ENCODE measurements at regions of chr11 and their contacts with region 1.

Region 1: DNA sequence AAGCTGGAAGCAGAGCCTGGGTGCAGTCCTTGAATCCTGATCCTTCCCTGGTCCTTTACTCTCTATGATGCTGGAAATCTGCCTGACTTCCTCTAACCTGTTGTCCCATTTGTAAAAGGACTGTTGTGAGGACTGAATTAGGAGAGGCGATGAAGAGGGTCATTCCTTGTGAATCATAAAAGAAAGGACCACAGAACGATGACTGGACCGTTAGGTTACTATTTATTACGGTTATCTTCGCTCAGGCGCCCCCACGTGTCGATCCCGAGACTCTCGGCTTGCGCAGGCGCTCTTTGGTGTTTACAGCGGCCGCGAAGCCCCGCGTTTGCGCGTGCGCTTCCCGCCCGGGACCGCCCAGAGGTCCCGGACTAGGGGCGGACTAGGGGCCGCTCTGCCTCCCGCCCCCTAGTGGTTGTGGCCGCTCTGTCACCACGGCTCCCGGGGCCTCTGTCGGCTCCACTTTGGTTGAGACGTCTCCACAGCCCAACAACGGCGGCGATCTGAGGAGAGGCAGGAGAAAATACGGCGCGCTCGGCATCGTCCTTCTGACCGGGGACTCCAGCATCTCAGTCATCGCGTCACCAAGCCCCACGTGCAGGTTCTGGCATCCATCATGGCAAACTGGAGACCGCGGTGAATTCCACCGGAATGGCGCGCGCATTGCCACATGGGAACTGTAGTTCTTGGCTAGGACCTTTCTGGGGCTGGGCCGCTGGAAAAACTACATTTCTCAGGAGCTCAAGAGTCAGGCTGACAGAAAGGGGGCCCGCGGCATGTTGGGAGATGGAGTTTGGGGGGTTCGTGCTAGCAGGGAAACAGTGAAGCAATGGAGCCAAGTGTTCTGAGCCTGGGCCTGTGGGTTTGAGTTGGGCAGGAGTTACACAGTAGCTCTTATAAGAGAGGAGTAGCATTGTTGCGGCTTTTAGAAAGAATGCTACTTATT is at the start of gene STARD10:
- DNase-seq: peak; percentile 94
- ATAC-seq: peak; percentile 93
- H3K4me3 Mint-ChIP-seq: peak within 1 kb of the TSS; percentile 99
- H3K27ac Mint-ChIP-seq: peak within 1 kb of the TSS; percentile 100
- H3K4me1 Mint-ChIP-seq: peaks cover 34% of the 10 kb centered on the region
- H3K27me3 Mint-ChIP-seq: no peaks in the 10 kb centered on the region
- CTCF ChIP-seq: peak; percentile 81
- total RNA-seq, gene STARD10: 42.6 and 46.8 TPM in 2 replicates

Region 2: DNA sequence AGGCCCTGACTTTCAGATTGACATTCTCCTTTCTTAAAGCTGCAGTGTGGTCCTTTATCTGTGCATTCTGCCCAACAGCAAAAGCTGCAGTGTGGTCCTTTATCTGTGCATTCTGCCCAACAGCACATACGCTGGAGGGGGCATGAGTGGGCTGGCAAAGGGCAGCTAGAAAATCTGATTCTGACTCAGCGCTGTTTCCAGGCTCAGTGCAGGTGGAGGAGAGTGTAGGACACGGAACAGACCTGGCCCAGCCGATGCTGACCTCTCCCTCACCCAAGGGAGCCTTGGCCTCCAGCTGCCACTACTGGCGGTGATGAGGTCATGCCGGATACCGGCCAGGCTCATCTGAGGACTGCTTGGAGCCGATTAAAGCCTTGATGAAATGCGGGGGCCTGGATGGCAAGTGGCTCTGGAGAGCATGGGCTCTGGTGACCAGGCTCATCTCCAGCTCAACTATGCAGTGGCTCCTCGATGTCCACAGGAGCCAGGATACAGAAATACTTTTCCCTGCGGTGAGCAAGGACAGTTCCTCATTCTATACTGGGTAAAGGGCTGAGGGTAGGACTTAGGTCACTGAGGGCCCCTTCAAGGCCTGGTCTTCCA is 444.0 kb before region 1 on chr11:
- CTCF ChIA-PET with region 1: no interaction called
- POLR2A ChIA-PET with region 1: no interaction called
- intact Hi-C with region 1: no loop called
- DNase-seq: no peak
- ATAC-seq: no peak
- H3K4me3 Mint-ChIP-seq: no peak overlapping the region
- H3K27ac Mint-ChIP-seq: no peak overlapping the region
- H3K4me1 Mint-ChIP-seq: no peaks in the 10 kb centered on the region
- H3K27me3 Mint-ChIP-seq: no peaks in the 10 kb centered on the region
- CTCF ChIP-seq: no peak

Region 3: DNA sequence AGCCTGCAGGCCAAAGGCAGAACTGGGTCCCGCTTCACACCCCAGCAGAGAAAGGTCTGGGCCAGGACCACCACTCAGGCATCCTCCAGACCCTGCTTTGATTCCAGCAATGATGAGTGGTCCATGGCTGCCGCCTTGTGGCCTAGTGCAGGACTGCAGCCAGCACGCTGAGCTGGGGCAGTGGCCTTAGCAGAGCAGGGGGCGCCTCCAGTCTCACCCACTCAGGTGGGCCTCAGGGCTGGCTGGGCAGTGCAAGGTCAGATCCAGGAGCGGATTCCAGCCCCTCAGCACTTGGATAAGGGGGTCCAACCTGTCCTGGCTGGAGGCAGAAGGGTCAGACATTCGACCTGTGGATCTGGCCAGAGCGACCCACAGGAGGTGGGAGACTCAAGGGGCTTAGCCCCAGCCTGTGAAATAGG is 109.9 kb before region 1 on chr11:
- CTCF ChIA-PET with region 1: interaction called, 18 read pairs
- POLR2A ChIA-PET with region 1: interaction called, 3 read pairs
- intact Hi-C with region 1: loop called (anchors 1 kb)
- DNase-seq: peak; percentile 70
- ATAC-seq: peak; percentile 79
- H3K4me3 Mint-ChIP-seq: no peak overlapping the region
- H3K27ac Mint-ChIP-seq: no peak overlapping the region
- H3K4me1 Mint-ChIP-seq: peaks cover 1% of the 10 kb centered on the region
- H3K27me3 Mint-ChIP-seq: no peaks in the 10 kb centered on the region
- CTCF ChIP-seq: peak; percentile 49

Region 4: GRCh38 chr11:72736452-72737069 is 57.1 kb before region 1 on chr11:
- CTCF ChIA-PET with region 1: interaction called, 30 read pairs
- POLR2A ChIA-PET with region 1: interaction called, 28 read pairs
- intact Hi-C with region 1: loop called (anchors 1 kb)
- DNase-seq: peak; percentile 47
- ATAC-seq: peak; percentile 41
- H3K4me3 Mint-ChIP-seq: peak overlapping the region; percentile 82
- H3K27ac Mint-ChIP-seq: peak overlapping the region; percentile 99
- H3K4me1 Mint-ChIP-seq: peaks cover 83% of the 10 kb centered on the region
- H3K27me3 Mint-ChIP-seq: no peaks in the 10 kb centered on the region
- CTCF ChIP-seq: no peak

Region 5: DNA sequence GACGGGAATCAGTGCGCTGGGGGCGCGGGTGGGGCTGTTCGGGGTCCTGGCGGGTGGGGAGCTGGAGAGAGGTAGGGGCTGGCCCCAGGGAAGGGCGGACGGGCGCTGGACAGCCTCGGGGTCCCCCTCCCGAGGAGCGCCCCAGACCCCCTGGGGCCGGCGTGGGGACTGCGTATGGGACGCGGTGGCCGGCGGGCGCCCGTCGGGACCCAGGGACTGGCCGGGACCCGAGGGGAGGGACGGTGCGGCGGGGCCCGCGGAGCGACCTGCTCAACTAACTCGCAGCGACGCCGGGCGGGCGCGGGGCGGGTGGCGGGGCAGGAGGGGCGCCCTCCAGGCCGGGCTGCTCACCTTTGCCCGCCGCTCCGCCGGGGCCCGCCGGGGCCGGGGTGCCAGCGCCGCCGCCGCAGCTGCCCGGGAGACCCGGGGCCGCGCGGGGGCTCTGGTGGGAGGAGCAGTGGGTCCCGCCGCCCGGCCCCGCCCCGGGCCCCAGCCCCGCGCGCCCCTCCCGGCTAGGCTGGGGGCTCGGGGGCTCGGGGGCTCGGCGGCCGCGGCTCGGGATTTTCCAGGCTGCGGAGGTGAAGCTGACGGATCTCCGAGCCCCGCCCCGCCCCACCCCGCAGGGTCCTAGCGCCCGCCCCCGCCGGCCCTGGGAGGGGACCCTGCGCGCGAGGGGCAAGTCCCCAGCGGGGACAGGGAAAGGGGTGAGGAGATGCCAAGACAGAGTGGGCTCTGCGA is 12.2 kb before region 1 on chr11:
- CTCF ChIA-PET with region 1: interaction called, 3 read pairs
- POLR2A ChIA-PET with region 1: interaction called, 19 read pairs
- intact Hi-C with region 1: loop called (anchors 1 kb)
- DNase-seq: peak; percentile 59
- ATAC-seq: peak; percentile 82
- H3K4me3 Mint-ChIP-seq: peak overlapping the region; percentile 83
- H3K27ac Mint-ChIP-seq: no peak overlapping the region
- H3K4me1 Mint-ChIP-seq: peaks cover 35% of the 10 kb centered on the region
- H3K27me3 Mint-ChIP-seq: no peaks in the 10 kb centered on the region
- CTCF ChIP-seq: no peak

Region 6: GRCh38 chr11:72814286-72815109 is 20.8 kb after region 1 on chr11 and contains the start of gene ATG16L2:
- CTCF ChIA-PET with region 1: interaction called, 11 read pairs
- POLR2A ChIA-PET with region 1: interaction called, 15 read pairs
- intact Hi-C with region 1: loop called (anchors 1 kb)
- DNase-seq: peak; percentile 97
- ATAC-seq: peak; percentile 75
- H3K4me3 Mint-ChIP-seq: peak within 1 kb of the TSS; percentile 98
- H3K27ac Mint-ChIP-seq: peak within 1 kb of the TSS; percentile 94
- H3K4me1 Mint-ChIP-seq: peaks cover 54% of the 10 kb centered on the region
- H3K27me3 Mint-ChIP-seq: no peaks in the 10 kb centered on the region
- CTCF ChIP-seq: no peak
- total RNA-seq, gene ATG16L2: 73.5 and 96.7 TPM in 2 replicates